CD8-positive, alpha-beta T cell (primary cell): ENCODE measurements at regions of chrX and their contacts with region 1.

Region 1: GRCh38 chrX:139801397-139801813 is 93.4 kb upstream of the MCF2 start:
- DNase-seq: no peak
- ATAC-seq: no peak
- H3K4me3 ChIP-seq: no peak overlapping the region
- H3K4me3 Mint-ChIP-seq: no peak overlapping the region
- H3K27ac ChIP-seq: no peak overlapping the region
- H3K27ac Mint-ChIP-seq: no peak overlapping the region
- H3K4me1 ChIP-seq: no peaks in the 10 kb centered on the region
- H3K4me1 Mint-ChIP-seq: no peaks in the 10 kb centered on the region
- H3K27me3 ChIP-seq: no peaks in the 10 kb centered on the region
- H3K27me3 Mint-ChIP-seq: no peaks in the 10 kb centered on the region
- CTCF ChIP-seq: no peak

Region 2: DNA sequence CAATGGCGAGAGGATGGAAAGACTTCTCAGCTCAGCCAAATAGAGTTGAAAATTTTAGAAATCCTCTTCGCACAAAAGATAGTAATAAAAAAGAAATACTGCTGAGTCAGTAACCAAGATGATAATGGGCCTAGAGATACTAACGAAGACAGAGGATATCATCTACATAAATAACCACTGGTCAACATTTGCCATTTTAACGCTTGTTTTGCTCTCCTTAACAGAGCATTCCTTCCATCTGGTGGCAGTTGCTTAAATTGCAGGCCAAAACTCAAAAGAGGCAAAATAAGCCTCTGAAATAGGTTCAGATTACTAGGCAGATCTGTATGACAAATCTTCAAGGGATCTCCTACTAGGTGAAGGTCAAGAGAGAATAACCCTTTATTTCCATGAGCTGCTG is 41.8 kb before region 1 on chrX:
- CTCF ChIA-PET with region 1: no interaction called
- POLR2A ChIA-PET with region 1: interaction called, 4 read pairs
- intact Hi-C with region 1: loop called in 1 of 2 experiments (anchors 10 kb)
- DNase-seq: peak in 1 of 9 experiments; percentile 7
- ATAC-seq: no peak
- H3K4me3 ChIP-seq: no peak overlapping the region
- H3K4me3 Mint-ChIP-seq: no peak overlapping the region
- H3K27ac ChIP-seq: no peak overlapping the region
- H3K27ac Mint-ChIP-seq: no peak overlapping the region
- H3K4me1 ChIP-seq: no peaks in the 10 kb centered on the region
- H3K4me1 Mint-ChIP-seq: no peaks in the 10 kb centered on the region
- H3K27me3 ChIP-seq: no peaks in the 10 kb centered on the region
- H3K27me3 Mint-ChIP-seq: no peaks in the 10 kb centered on the region
- CTCF ChIP-seq: no peak

Region 3: GRCh38 chrX:139776601-139777000 is 24.8 kb before region 1 on chrX:
- CTCF ChIA-PET with region 1: no interaction called
- POLR2A ChIA-PET with region 1: no interaction called
- intact Hi-C with region 1: no loop called
- DNase-seq: peak in 1 of 9 experiments; percentile 2
- ATAC-seq: no peak
- H3K4me3 ChIP-seq: no peak overlapping the region
- H3K4me3 Mint-ChIP-seq: no peak overlapping the region
- H3K27ac ChIP-seq: no peak overlapping the region
- H3K27ac Mint-ChIP-seq: no peak overlapping the region
- H3K4me1 ChIP-seq: no peaks in the 10 kb centered on the region
- H3K4me1 Mint-ChIP-seq: no peaks in the 10 kb centered on the region
- H3K27me3 ChIP-seq: no peaks in the 10 kb centered on the region
- H3K27me3 Mint-ChIP-seq: no peaks in the 10 kb centered on the region
- CTCF ChIP-seq: no peak

Region 4: GRCh38 chrX:140848800-140849199 is 1047.4 kb after region 1 on chrX:
- CTCF ChIA-PET with region 1: no interaction called
- POLR2A ChIA-PET with region 1: no interaction called
- intact Hi-C with region 1: no loop called
- DNase-seq: no peak
- ATAC-seq: no peak
- H3K4me3 ChIP-seq: no peak overlapping the region
- H3K4me3 Mint-ChIP-seq: no peak overlapping the region
- H3K27ac ChIP-seq: no peak overlapping the region
- H3K27ac Mint-ChIP-seq: no peak overlapping the region
- H3K4me1 ChIP-seq: no peaks in the 10 kb centered on the region
- H3K4me1 Mint-ChIP-seq: no peaks in the 10 kb centered on the region
- H3K27me3 ChIP-seq: no peaks in the 10 kb centered on the region
- H3K27me3 Mint-ChIP-seq: no peaks in the 10 kb centered on the region
- CTCF ChIP-seq: no peak